ENCODE measurements at regions of chr14 and their contacts with region 1.

Region 1: GRCh38 chr14:103078093-103078749 is 5.8 kb upstream of the LBHD2 start:
- DNase-seq: peak; percentile 92
- H3K4me3 ChIP-seq: no peak overlapping the region
- H3K27ac ChIP-seq: no peak overlapping the region
- H3K4me1 ChIP-seq: peaks cover 6% of the 10 kb centered on the region
- H3K27me3 ChIP-seq: no peaks in the 10 kb centered on the region
- CTCF ChIP-seq: peak; percentile 75

Region 2: GRCh38 chr14:103292426-103293374 is 214.5 kb after region 1 on chr14:
- CTCF ChIA-PET with region 1: interaction called, 3 read pairs
- POLR2A ChIA-PET with region 1: no interaction called
- intact Hi-C with region 1: loop called (anchors 1 kb)
- DNase-seq: peak; percentile 81
- H3K4me3 ChIP-seq: no peak overlapping the region
- H3K27ac ChIP-seq: no peak overlapping the region
- H3K4me1 ChIP-seq: no peaks in the 10 kb centered on the region
- H3K27me3 ChIP-seq: no peaks in the 10 kb centered on the region
- CTCF ChIP-seq: peak; percentile 91

Region 3: DNA sequence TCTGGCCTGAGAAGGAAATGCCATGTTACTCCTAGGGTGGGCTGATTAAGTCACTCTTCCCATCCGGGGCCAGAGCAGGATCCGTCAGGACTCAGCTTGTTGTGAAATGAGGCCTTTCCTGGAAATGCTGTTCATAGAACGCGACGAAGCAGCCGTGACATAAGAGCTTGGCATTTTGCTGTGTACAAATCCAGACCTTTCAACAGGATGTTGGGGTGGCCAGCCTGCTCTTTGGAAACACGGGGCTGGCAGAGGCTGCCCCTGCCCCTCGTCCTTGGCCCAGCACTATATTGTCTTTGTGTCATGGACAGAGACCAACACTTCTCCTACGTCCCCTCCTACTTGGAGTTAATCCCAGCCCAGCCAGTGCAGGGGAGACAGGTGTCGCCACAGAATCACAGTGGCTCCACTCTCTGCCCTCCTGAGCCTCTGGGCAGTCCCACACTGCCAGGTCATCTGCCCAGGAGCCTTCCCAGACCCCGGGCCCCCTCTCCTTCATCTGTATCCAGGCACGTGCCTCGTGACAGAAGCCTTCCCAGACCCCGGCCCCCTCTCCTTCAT is 237.2 kb after region 1 on chr14:
- CTCF ChIA-PET with region 1: no interaction called
- POLR2A ChIA-PET with region 1: no interaction called
- intact Hi-C with region 1: no loop called
- DNase-seq: no peak
- H3K4me3 ChIP-seq: no peak overlapping the region
- H3K27ac ChIP-seq: no peak overlapping the region
- H3K4me1 ChIP-seq: no peaks in the 10 kb centered on the region
- H3K27me3 ChIP-seq: no peaks in the 10 kb centered on the region
- CTCF ChIP-seq: no peak

Region 4: DNA sequence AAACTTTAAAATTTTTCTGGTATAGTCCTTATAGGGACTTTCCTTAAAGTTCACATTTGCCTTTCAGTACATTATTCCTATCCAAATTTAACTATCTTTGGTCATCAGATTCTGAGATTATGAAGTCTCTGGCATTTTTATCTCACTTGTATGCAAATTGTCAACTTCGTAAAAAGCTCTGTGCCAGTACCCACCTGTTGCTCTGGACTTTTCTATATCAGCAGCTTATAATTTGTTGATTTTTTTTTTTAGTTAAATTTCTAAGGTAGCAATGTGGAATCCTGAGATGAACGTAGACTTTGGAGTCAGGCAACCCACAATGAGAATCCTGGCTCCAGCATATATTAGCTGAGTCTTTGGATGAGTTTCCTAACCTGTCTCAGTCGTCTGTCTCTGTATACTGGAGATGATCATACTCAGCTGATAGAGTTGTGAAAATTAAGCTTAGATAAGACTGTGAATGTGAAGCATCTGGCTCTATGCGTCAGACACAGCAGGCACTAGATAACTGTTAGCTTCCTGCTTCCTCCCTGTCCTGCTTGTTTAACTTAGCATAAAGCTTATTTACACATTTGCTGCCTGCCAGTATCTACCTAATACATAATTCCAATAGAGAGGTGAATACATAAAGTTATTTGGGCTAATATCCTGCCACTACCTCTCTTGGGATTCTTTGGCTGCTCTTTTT is 366.8 kb after region 1 on chr14:
- CTCF ChIA-PET with region 1: no interaction called
- POLR2A ChIA-PET with region 1: no interaction called
- intact Hi-C with region 1: loop called (anchors 5 kb)
- DNase-seq: peak; percentile 80
- H3K4me3 ChIP-seq: no peak overlapping the region
- H3K27ac ChIP-seq: peak overlapping the region; percentile 42
- H3K4me1 ChIP-seq: peaks cover 21% of the 10 kb centered on the region
- H3K27me3 ChIP-seq: no peaks in the 10 kb centered on the region
- CTCF ChIP-seq: no peak

Region 5: GRCh38 chr14:103546652-103547454 is 468.6 kb after region 1 on chr14:
- CTCF ChIA-PET with region 1: no interaction called
- POLR2A ChIA-PET with region 1: no interaction called
- intact Hi-C with region 1: loop called (anchors 5 kb)
- DNase-seq: peak; percentile 64
- H3K4me3 ChIP-seq: no peak overlapping the region
- H3K27ac ChIP-seq: no peak overlapping the region
- H3K4me1 ChIP-seq: peaks cover 30% of the 10 kb centered on the region
- H3K27me3 ChIP-seq: no peaks in the 10 kb centered on the region
- CTCF ChIP-seq: peak; percentile 99

Region 6: DNA sequence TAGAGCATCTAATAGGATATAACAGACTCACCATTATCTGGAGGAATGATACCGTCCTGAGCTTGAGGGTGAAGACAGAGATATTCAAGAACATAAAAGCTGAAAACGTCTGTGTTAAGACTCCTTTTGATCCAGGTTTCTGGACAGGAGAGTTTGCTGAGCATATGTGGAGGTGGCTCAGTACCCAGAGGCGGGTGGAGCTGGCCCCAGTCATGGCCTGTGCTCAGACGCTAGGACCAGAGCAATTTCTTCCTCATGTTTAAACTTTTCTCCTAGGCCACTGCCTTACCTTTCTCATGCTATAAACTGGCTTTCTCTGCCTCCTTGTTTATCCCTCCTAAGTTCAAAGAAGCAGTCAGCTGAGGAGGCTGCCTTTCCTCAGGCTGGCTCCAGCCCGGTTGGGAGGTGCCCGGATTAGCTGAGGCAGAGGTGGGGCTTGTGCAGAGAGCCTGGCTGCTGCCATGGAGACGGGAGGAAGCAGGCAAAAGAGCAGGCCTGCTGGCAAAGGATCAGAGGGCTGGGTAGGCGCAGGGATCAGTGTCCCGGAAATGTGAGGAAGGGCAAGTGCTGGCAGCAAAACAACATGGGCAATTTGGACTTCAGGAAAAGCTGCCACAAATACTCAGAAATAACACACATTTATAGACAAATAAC is 498.3 kb after region 1 on chr14:
- CTCF ChIA-PET with region 1: interaction called, 16 read pairs
- POLR2A ChIA-PET with region 1: no interaction called
- intact Hi-C with region 1: no loop called
- DNase-seq: peak; percentile 93
- H3K4me3 ChIP-seq: no peak overlapping the region
- H3K27ac ChIP-seq: no peak overlapping the region
- H3K4me1 ChIP-seq: peaks cover 14% of the 10 kb centered on the region
- H3K27me3 ChIP-seq: no peaks in the 10 kb centered on the region
- CTCF ChIP-seq: no peak

Measured in A673 (cell line).